Right ventricle myocardium superior (tissue), 1 donor: ENCODE measurements at regions of chr10 and their contacts with region 1.

Region 1: GRCh38 chr10:92432596-92432995 is 141.3 kb downstream of the IDE start:
- DNase-seq: no peak
- ATAC-seq: no peak

Region 2: DNA sequence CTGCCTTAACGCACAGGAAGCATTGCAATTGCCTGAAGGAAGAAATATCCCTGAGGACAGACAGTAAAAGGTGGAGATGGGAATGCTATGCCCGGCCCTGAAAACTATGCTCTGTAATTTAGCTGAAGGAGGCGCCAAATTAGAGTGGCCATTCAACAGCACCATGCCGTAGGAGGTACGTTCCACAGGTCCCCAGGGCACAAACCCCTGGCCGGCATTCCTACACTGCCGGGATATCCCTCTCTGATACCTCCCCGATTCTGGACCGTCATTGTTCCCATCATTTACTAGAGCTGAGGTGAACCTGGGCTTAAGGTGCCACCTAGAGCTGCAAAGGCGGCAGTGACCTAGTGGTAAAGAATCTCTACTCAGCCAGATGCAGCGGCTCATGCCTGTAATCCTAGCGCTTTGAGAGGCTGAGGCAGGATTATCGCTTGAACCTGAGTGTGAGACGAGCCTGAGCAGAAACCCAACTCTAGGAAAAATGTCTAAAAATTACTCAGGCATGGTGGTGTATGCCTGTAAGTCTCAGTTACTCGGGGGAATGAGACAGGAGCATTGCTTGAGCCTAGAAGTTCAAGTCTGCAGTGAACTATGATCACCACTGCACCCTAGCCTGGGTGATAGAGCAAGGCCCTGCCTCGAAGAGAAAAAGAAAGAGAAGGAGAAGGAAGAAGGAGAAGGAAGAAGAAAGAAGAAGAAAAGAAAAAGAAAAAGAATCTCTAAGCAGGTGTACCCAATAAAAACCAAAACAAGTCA is 687.3 kb before region 1 on chr10:
- intact Hi-C with region 1: no loop called
- DNase-seq: no peak
- ATAC-seq: peak; percentile 62

Region 3: GRCh38 chr10:92087750-92088395 is 344.7 kb before region 1 on chr10:
- intact Hi-C with region 1: loop called (anchors 5 kb)
- DNase-seq: peak; percentile 55
- ATAC-seq: peak; percentile 89